ENCODE measurements at regions of chr6 and their contacts with region 1.

Region 1: GRCh38 chr6:722077-722524 is 29.2 kb upstream of the EXOC2 start:
- DNase-seq: peak; percentile 88
- ATAC-seq: peak; percentile 86
- H3K4me3 Mint-ChIP-seq: no peak overlapping the region
- H3K27ac Mint-ChIP-seq: no peak overlapping the region
- H3K4me1 Mint-ChIP-seq: peaks cover 3% of the 10 kb centered on the region
- H3K27me3 Mint-ChIP-seq: peaks cover 7% of the 10 kb centered on the region
- CTCF ChIP-seq: peak; percentile 89

Region 2: DNA sequence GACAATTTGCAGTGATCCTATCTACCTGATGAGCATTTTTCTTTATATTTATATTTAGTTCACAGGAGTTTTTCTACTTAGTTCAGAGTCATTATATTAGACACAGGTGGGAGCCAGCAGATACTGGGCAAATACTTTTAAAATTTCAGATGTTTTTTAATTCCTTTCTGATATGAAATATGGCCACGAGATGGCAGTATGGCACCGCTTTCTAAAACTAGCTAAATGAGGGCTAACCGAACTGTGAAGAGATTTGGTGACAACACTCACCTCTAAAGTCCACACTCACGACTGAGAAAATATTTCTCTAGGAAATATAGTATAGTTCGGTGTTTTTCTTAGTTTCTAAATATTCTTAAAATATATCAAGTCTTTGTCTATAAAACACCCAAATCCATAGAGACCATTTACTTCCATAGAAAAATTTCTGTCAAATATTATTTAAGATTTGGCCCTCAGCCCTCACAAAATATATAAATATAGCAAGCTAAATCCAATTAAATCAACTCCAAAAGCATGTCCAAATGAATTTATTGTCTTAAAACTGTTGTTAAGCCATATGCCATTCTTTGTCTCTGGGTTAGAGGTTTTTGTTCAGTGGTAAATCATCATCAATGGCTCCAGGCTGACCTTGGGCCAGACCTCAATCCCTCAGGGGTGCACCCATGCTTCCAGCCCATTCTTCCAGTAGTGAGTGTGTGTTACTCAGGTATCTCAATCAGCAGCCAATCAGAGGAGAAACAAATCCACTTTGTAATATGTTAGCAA is 128.8 kb before region 1 on chr6:
- CTCF ChIA-PET with region 1: interaction called, 55 read pairs
- POLR2A ChIA-PET with region 1: no interaction called
- intact Hi-C with region 1: loop called (anchors 10 kb)
- DNase-seq: peak; percentile 85
- ATAC-seq: peak; percentile 79
- H3K4me3 Mint-ChIP-seq: no peak overlapping the region
- H3K27ac Mint-ChIP-seq: peak overlapping the region; percentile 35
- H3K4me1 Mint-ChIP-seq: peaks cover 7% of the 10 kb centered on the region
- H3K27me3 Mint-ChIP-seq: no peaks in the 10 kb centered on the region
- CTCF ChIP-seq: peak; percentile 74

Region 3: DNA sequence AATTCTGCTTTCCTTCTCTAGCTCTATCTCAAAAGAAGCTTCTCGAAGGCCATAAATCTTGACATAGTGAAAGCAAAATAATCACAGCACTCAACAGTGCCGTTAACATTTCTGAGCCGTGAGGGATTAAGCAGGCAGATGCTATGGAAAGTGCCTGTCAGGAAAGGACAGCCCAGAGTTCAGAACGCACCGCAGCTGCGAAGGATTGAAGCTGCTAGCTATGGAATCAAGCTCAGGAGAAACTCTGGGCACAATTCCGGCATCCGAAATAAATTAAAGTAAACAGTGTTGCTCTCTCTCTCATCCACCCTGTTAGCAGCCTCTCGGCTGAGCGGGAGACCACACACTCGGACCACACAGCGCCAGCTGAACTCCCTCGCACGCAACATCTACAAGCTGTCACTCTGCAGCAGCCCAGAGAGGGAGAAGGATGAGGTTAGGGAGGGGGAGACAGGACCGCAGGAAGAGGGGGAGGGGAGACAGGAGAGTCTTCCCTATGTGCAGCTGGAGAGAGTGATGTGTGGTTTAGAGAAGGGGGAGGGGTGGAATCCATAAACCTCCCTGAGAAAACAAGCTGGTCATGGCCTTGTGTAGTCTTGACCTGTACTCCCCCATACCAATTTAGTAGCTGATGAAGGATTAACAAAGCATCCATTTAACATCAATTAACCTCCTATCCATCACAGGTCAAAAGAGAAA is 38.2 kb before region 1 on chr6:
- CTCF ChIA-PET with region 1: interaction called, 11 read pairs
- POLR2A ChIA-PET with region 1: no interaction called
- intact Hi-C with region 1: no loop called
- DNase-seq: peak; percentile 55
- ATAC-seq: peak; percentile 37
- H3K4me3 Mint-ChIP-seq: peak overlapping the region; percentile 36
- H3K27ac Mint-ChIP-seq: peak overlapping the region; percentile 36
- H3K4me1 Mint-ChIP-seq: peaks cover 51% of the 10 kb centered on the region
- H3K27me3 Mint-ChIP-seq: no peaks in the 10 kb centered on the region
- CTCF ChIP-seq: no peak

Region 4: DNA sequence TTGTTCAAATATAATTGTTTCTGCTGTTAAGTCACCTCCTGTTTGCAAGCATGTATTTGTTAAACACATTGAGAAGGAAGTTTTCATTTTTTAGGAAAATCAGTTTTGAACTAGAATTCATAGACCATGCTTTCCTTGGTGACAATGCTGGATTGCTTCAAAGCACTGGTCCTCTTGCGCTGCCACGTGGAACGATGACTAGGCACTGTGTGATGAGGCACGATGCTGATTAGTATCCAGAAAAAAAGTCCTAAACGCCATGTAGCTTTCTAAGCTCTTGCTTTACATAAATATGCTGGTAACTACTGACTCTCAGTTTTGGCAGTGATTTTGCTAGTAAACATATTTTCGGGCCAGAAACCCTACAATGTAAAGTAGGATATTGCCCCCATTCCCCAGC is 18.1 kb before region 1 on chr6:
- CTCF ChIA-PET with region 1: interaction called, 43 read pairs
- POLR2A ChIA-PET with region 1: no interaction called
- intact Hi-C with region 1: no loop called
- DNase-seq: no peak
- ATAC-seq: no peak
- H3K4me3 Mint-ChIP-seq: no peak overlapping the region
- H3K27ac Mint-ChIP-seq: no peak overlapping the region
- H3K4me1 Mint-ChIP-seq: peaks cover 5% of the 10 kb centered on the region
- H3K27me3 Mint-ChIP-seq: peaks cover 17% of the 10 kb centered on the region
- CTCF ChIP-seq: no peak

Region 5: GRCh38 chr6:733431-734219 is 11.5 kb after region 1 on chr6:
- CTCF ChIA-PET with region 1: interaction called, 16 read pairs
- POLR2A ChIA-PET with region 1: no interaction called
- intact Hi-C with region 1: no loop called
- DNase-seq: no peak
- ATAC-seq: no peak
- H3K4me3 Mint-ChIP-seq: no peak overlapping the region
- H3K27ac Mint-ChIP-seq: no peak overlapping the region
- H3K4me1 Mint-ChIP-seq: no peaks in the 10 kb centered on the region
- H3K27me3 Mint-ChIP-seq: peaks cover 4% of the 10 kb centered on the region
- CTCF ChIP-seq: no peak

Region 6: DNA sequence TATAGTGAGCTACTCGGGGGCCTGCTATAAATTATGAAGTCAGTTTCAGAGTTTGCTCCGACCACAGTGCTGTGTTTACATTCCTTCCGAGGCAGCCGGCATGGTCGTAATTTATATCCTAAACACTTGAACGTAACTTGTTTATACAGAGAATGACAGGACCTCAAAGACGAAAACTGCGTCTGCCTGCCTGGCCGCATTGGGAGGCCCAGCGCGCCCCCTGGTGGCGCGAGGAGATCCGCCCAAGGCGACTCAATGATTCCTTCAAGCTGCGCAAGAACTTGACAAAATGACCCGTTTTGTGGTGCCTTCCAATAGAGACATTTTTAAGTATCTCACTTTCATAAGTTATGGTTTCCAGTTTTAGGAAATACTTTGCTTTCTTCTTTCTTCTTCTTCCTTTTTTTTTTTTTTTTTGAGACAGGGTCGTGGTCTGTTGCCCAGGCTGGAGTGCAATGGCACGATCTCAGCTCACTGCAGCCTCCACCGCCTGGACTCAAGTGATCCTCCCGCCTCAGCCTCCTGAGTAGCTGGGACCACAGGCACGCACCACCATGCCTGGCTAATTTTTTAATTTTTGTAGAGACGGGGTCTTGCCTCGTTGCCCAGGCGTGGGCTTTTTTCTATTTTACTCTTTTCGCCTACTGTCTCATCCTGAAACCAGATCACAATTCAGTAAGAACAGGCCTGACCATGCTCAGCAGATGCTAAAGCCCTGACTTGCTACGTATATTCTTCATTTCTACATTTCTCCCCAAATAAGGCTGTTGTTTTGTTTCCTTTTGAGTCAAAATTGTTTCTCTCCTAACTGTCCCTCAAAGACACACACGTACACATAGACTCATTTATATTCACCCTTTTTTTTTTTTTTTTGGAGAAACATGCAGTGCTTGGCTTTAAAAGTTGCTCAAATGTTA is 675.1 kb after region 1 on chr6:
- CTCF ChIA-PET with region 1: interaction called, 10 read pairs
- POLR2A ChIA-PET with region 1: no interaction called
- intact Hi-C with region 1: no loop called
- DNase-seq: peak; percentile 84
- ATAC-seq: peak; percentile 79
- H3K4me3 Mint-ChIP-seq: no peak overlapping the region
- H3K27ac Mint-ChIP-seq: no peak overlapping the region
- H3K4me1 Mint-ChIP-seq: peaks cover 4% of the 10 kb centered on the region
- H3K27me3 Mint-ChIP-seq: peaks cover 45% of the 10 kb centered on the region
- CTCF ChIP-seq: peak; percentile 92